GM12878 (cell line): ENCODE measurements at regions of chr20 and their contacts with region 1.

Region 1: DNA sequence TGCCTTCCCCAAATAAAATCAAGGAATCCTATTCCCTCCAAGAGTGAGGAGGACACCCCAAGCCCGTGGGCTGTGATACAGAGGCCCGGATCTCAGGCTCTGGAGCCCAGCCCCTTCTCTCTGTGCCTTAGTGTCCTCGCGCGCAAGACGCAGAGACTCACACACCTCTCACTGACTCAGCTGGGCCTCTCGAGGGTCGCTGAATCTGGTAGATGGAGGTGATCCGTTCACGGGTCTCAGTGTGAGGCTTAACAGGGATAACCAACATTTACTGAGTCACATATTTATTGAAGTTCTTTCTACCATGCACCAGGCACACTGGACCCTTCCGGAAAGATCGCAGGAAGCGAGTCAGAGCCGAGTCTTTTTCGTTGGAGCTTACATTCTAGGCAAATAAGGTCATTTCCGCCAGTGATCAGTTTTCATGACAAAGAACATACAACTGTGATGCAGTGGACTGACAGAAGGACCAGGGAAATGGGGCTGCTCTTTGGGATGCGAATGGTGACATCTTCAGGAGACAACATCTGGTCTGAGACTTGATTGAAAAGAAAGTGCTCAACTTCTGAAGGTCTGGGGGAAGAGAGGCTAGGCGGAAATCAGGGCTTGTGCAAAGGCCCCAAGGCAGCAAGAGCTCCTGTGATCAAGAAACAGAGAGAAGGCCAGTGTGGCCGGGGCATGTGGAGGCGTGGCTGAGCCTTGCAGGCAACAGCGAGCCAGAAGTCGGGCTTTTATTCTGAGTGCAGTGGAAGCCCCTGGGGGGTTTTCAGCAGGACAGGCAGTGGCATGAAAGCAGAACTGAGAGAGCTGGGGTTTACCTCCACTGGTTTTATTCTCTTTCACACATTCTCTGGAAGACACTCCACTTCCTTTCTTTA is 56.8 kb downstream of the APCDD1L start:
- DNase-seq: peak; percentile 89
- ATAC-seq: peak; percentile 99
- H3K4me3 ChIP-seq: peak overlapping the region; percentile 32
- H3K27ac ChIP-seq: peak overlapping the region; percentile 49
- H3K4me1 ChIP-seq: peaks cover 29% of the 10 kb centered on the region
- H3K27me3 ChIP-seq: no peaks in the 10 kb centered on the region
- CTCF ChIP-seq: no peak
- EP300 ChIP-seq: peak; percentile 90 to 95
- POLR2A ChIP-seq: no peak
- RAD21 ChIP-seq: no peak

Region 2: DNA sequence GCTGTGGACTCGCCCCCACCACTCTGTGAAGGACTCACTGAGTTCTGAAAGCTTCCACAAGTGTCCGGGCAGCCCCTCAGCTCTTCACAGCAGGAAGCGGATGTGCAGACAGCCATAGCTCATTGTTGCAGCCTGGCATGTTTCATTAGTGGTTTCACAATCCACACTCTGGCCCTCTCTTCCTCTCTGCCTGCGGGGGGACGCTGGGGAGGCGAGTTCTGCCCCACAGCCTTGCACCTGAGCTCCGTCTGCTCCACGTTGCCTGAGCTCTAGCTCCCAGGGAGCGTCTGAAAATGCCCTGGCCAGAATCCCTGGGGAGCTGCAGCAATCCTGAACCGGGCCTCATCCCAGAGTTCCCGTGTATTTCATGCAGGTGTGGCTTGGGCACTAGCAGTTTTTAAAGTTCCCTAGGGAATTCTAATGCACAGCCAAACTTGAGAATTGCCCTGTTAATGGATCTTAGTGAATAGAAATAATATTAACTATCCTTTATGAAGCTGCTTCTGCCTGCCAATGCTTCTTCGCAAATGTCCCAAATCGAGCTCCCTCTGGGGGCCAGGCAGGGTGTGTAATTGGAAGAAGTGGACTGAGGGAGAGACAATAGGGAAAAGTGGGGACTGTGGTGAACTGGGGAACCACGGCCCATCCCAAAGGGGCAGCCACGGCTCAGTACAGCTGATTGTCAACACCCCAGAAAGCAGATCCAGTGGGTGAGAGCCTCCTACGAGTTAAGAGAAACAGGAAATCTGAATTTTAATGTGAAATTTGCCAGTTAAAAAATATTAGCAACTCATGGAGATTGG is 985.0 kb before region 1 on chr20:
- CTCF ChIA-PET with region 1: no interaction called
- POLR2A ChIA-PET with region 1: no interaction called
- RAD21 ChIA-PET with region 1: no interaction called
- SMC1A ChIA-PET with region 1: no interaction called
- in situ Hi-C with region 1: loop called (anchors 10 kb)
- intact Hi-C with region 1: no loop called
- DNase-seq: peak; percentile 68
- ATAC-seq: peak; percentile 82
- H3K4me3 ChIP-seq: no peak overlapping the region
- H3K27ac ChIP-seq: peak overlapping the region; percentile 43
- H3K4me1 ChIP-seq: peaks cover 64% of the 10 kb centered on the region
- H3K27me3 ChIP-seq: no peaks in the 10 kb centered on the region
- CTCF ChIP-seq: 0 out of 6 replicates have a peak, but pooled peaks of 2 of the 3 experiments have one; percentile 10 to 11
- EP300 ChIP-seq: no peak
- POLR2A ChIP-seq: 0 out of 2 replicates have a peak, but pooled peaks have one; percentile 28
- RAD21 ChIP-seq: peak; percentile 3; the same call in 1 of the 2 replicates

Region 3: DNA sequence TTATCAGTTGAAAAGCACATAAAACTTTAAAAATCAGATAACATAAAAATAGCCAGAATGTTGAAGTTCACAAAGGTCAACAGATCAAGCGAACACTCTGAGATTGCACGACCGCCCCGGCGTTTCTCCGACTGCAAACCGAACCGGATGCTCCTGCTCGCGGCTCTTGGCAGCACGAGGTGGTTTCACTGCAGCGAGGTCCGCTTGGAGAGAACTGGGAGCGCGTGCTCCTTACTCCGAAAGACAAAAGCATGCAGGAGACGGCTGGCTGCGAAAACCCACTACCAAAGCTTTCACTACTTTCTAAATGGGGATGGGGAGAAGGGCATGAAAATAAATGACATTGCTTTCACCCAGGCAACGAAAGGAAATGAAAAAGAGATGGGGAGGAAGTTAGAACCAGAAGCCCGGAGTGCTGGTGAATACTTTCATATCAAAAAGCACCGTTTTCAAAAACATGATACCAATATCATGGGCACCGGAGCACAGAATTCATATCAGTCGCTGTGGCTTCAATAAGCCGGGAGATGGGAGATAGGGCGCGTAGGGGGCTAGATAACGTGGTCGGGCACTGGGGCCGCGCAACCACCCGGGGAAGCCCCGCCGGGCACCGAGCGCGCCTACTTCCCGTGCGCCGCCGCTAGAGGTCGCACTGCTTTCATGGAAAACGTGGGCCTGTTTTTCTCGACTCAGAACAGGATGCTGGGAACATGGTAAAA is 221.6 kb before region 1 on chr20:
- CTCF ChIA-PET with region 1: interaction called, 11 read pairs
- POLR2A ChIA-PET with region 1: no interaction called
- RAD21 ChIA-PET with region 1: interaction called, 3 read pairs
- SMC1A ChIA-PET with region 1: interaction called, 9 read pairs
- in situ Hi-C with region 1: no loop called
- intact Hi-C with region 1: no loop called
- DNase-seq: peak; percentile 12
- ATAC-seq: peak; percentile 97
- H3K4me3 ChIP-seq: peak overlapping the region; percentile 49
- H3K27ac ChIP-seq: 0 out of 2 replicates have a peak overlapping the region, but pooled peaks have one; percentile 20
- H3K4me1 ChIP-seq: no peaks in the 10 kb centered on the region; the same call in 1 of the 2 replicates
- H3K27me3 ChIP-seq: no peaks in the 10 kb centered on the region
- CTCF ChIP-seq: peak; percentile 95 to 96 (median 95)
- EP300 ChIP-seq: no peak
- POLR2A ChIP-seq: no peak
- RAD21 ChIP-seq: peak; percentile 93

Region 4: GRCh38 chr20:58271606-58272402 is 186.6 kb before region 1 on chr20:
- CTCF ChIA-PET with region 1: no interaction called
- POLR2A ChIA-PET with region 1: no interaction called
- RAD21 ChIA-PET with region 1: no interaction called
- SMC1A ChIA-PET with region 1: no interaction called
- in situ Hi-C with region 1: no loop called
- intact Hi-C with region 1: no loop called
- DNase-seq: no peak
- ATAC-seq: no peak
- H3K4me3 ChIP-seq: no peak overlapping the region
- H3K27ac ChIP-seq: no peak overlapping the region
- H3K4me1 ChIP-seq: no peaks in the 10 kb centered on the region
- H3K27me3 ChIP-seq: no peaks in the 10 kb centered on the region
- CTCF ChIP-seq: no peak
- EP300 ChIP-seq: no peak
- POLR2A ChIP-seq: no peak
- RAD21 ChIP-seq: no peak

Region 5: DNA sequence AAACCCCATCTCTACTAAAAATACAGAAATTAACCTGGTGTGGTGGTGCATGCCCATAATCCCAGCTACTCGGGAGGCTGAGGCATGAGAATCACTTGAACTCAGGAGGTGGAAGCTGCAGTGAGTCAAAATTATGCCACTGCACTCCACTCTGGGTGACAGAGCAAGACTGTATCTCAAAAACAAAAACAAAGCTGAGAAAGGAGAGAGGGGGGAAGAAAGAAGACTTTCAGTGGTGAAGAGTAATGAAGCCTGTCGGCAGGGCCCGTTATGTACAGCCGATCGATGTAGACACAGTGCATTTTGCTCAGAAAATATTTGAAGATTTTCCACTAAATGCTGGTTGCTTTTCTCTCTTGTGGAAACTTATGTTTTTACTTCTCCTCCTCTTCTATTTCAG is 55.6 kb before region 1 on chr20:
- CTCF ChIA-PET with region 1: no interaction called
- POLR2A ChIA-PET with region 1: interaction called, 5 read pairs
- RAD21 ChIA-PET with region 1: interaction called, 9 read pairs
- SMC1A ChIA-PET with region 1: interaction called, 8 read pairs
- in situ Hi-C with region 1: no loop called
- intact Hi-C with region 1: loop called (anchors 5 kb)
- DNase-seq: peak; percentile 21
- ATAC-seq: peak; percentile 90
- H3K4me3 ChIP-seq: peak overlapping the region; percentile 53; the same call in 1 of the 2 replicates
- H3K27ac ChIP-seq: peak overlapping the region; percentile 73
- H3K4me1 ChIP-seq: peaks cover 50% of the 10 kb centered on the region
- H3K27me3 ChIP-seq: no peaks in the 10 kb centered on the region
- CTCF ChIP-seq: no peak
- EP300 ChIP-seq: no peak
- POLR2A ChIP-seq: no peak
- RAD21 ChIP-seq: no peak

Region 6: GRCh38 chr20:59006864-59007664 is 548.6 kb after region 1 on chr20 and contains the start of gene CTSZ:
- CTCF ChIA-PET with region 1: no interaction called
- POLR2A ChIA-PET with region 1: no interaction called
- RAD21 ChIA-PET with region 1: no interaction called
- SMC1A ChIA-PET with region 1: no interaction called
- in situ Hi-C with region 1: loop called (anchors 10 kb)
- intact Hi-C with region 1: no loop called
- DNase-seq: no peak
- ATAC-seq: peak; percentile 52
- H3K4me3 ChIP-seq: peak within 1 kb of the TSS; percentile 92
- H3K27ac ChIP-seq: peak within 1 kb of the TSS; percentile 95
- H3K4me1 ChIP-seq: peaks cover 35% of the 10 kb centered on the region
- H3K27me3 ChIP-seq: no peaks in the 10 kb centered on the region
- CTCF ChIP-seq: no peak
- EP300 ChIP-seq: no peak
- POLR2A ChIP-seq: peak; percentile 70
- RAD21 ChIP-seq: no peak
- polyA plus RNA-seq, gene CTSZ: 6.0 to 14.0 TPM